ENCODE measurements at regions of chr20 and their contacts with region 1.

Region 1: GRCh38 chr20:23086056-23086566 is at the start of gene CD93:
- DNase-seq: peak; percentile 76
- ATAC-seq: peak; percentile 62 to 67
- total RNA-seq, gene CD93: 46.3 to 102 TPM

Region 2: DNA sequence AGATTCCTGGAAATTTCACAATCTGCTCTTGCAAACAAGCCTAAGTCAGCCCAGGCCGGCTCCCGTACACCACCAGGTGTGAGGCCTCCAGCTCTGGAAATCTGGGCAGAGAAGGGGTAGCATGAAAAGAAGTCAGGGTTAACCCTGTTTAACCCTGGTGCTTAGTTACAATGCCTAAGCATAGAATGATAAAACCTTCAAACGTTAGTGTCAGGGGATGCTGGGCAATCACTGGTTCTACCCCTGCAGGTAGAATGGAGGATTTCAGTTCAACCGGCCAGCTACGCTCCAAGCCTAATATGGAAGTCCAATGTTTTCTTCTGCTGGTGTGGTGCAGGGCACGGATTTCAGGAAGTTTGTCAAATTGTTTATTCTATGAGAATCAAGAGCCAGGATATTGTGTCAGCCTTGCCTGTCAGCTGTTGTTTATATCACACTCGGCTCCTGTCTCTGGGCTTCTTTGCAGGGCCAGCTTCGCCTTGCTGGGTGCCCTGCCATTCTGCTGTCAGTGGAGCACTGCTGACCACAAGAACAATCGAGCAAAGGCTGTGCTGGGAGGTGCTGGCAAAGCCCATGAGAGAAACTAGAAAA is 20.2 kb after region 1 on chr20:
- intact Hi-C with region 1: no loop called
- DNase-seq: peak; percentile 31
- ATAC-seq: peak; percentile 56 to 63

Region 3: DNA sequence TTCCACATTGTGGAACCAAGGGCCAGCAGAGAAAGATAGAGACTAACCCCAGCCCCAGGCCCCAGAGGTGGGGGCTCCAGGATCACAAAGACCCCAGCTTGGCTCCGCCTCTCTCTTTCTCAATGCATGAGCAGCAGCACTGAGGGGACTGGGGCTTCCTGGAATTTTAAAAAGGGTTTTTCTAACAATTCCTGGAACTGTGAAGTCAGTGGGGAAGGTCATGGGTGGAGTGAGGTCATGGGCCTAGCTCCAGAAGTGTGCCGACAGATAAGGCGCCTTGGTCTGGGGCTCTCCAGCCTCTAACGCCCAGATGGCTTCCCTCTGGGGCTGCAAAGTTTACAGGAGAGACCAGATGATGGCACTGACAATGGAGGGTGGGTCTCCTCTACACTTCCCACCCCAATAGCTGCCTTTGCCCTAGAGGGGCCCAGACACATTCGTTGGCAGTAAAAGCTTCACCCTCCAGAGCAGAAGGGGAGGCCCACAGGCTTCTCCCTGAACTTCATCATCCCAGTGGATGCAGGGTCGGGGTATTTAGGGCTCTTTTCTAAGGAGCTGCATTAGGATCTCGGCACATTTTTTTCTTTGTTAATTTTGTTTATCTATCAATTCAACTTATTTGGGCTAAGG is 46.9 kb after region 1 on chr20:
- intact Hi-C with region 1: loop called in 1 of 2 experiments (anchors 5 kb)
- DNase-seq: peak; percentile 72
- ATAC-seq: peak; percentile 54 to 80